Heart left ventricle (tissue), 16 donors: ENCODE measurements at regions of chr17 and their contacts with region 1.

Region 1: GRCh38 chr17:49843774-49844350 is 4.0 kb downstream of the TAC4 start:
- DNase-seq: peak in 1 of 5 donors; percentile 24
- ATAC-seq: no peak
- H3K4me3 ChIP-seq: no peak overlapping the region
- H3K27ac ChIP-seq: peak overlapping the region in 2 of 12 donors; percentile 15 to 91
- H3K4me1 ChIP-seq: peaks cover 0 to 46% (median 25%) of the 10 kb centered on the region in 12 donors
- H3K27me3 ChIP-seq: no peaks in the 10 kb centered on the region
- CTCF ChIP-seq: peak in 4 of 12 donors; percentile 22 to 34 (median 24)
- POLR2A ChIP-seq: no peak

Region 2: DNA sequence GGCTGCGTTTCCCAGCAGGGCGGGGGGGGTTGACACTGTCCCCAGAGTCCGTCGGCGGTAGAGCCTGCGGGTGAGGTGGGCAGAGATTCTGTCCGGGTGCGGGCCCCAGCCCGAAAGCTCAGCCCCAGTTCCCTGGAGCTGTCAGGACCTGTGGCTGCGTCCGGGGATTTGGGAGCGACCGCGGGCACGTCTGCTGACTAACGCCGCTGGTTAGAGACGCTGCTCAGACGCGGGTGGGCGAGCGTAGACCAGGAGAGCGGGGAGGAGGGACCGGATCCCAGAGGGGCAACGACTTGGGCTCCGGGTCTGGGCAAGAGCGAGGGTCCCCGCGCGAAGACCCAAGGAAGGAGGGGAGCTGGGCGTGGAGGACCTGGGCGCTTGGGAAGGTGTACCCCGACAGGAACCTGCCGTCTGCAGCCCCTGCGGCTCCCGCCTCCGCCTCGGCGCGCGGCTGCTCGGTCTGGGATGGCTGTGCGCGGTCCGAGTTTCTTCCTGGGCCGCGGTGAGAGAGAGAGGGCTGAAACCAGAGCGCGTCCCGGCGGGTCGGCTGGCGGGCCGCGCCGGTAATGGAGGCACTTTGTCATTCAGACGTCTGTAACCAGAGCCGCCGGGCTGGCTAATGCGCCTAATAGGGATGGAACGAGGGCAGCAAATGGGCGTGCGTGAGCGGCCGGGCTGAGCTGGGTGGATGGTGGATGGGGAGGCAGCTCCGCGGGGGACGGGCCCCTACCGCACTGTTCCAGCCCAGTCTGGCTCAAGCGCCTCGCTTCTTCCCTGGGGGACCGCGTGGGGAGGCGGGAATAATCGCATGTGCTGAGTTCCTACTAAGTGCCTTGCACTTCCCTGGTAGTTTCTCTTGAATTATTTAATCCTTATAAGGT is 346.5 kb before region 1 on chr17:
- intact Hi-C with region 1: no loop called
- DNase-seq: peak in 3 of 5 donors; percentile 68 to 83 (median 77)
- ATAC-seq: peak in 3 of 4 donors; percentile 59 to 76 (median 74)
- H3K4me3 ChIP-seq: peak overlapping the region; percentile 29 to 76 (median 56)
- H3K27ac ChIP-seq: peak overlapping the region in 5 of 12 donors; percentile 9 to 48 (median 32)
- H3K4me1 ChIP-seq: peaks cover 0 to 38% (median 25%) of the 10 kb centered on the region in 12 donors
- H3K27me3 ChIP-seq: peaks cover 17 to 77% (median 54%) of the 10 kb centered on the region in 9 donors
- CTCF ChIP-seq: no peak
- POLR2A ChIP-seq: no peak

Region 3: GRCh38 chr17:49588726-49589576 is 254.9 kb before region 1 on chr17:
- intact Hi-C with region 1: no loop called
- DNase-seq: no peak
- ATAC-seq: no peak
- H3K4me3 ChIP-seq: no peak overlapping the region
- H3K27ac ChIP-seq: peak overlapping the region in 1 of 12 donors; percentile 16
- H3K4me1 ChIP-seq: peaks cover 0 to 2% (median 0%) of the 10 kb centered on the region in 12 donors
- H3K27me3 ChIP-seq: no peaks in the 10 kb centered on the region
- CTCF ChIP-seq: no peak
- POLR2A ChIP-seq: no peak

Region 4: DNA sequence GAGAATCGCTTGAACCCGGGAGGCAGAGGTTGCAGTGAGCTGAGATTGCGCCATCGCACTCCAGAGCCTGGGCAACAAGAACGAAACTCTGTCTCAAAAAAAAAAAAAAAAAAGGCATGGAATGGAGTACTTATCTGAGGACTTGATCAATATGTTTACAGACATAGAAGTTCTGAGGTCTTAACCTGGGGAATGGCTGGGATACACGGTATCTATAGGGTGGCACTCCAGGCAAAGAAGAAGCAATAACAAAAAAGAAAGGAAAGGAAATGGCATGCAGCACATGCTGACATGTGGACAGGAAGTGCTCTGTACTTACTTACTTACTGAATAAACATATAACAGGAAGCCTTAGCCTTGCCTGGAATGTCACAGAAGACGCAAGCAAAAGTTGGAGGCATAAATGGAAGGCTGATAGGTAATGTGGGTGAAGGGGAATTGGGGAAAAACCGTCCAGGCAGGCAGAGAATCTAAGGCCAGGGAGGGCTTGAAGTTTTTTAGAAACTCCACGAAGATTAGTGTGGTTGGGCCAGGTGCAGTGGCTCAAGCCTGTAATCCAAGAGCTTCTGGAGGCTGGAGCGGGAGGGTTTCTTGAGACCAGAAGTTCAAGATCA is 155.9 kb before region 1 on chr17:
- intact Hi-C with region 1: no loop called
- DNase-seq: no peak
- ATAC-seq: peak; percentile 10 to 58 (median 28)
- H3K4me3 ChIP-seq: peak overlapping the region in 1 of 12 donors; percentile 43
- H3K27ac ChIP-seq: peak overlapping the region; percentile 1 to 93 (median 64)
- H3K4me1 ChIP-seq: peaks cover 0 to 52% (median 26%) of the 10 kb centered on the region in 12 donors
- H3K27me3 ChIP-seq: no peaks in the 10 kb centered on the region
- CTCF ChIP-seq: no peak
- POLR2A ChIP-seq: no peak

Region 5: GRCh38 chr17:49715717-49716279 is 128.1 kb before region 1 on chr17:
- intact Hi-C with region 1: loop called in 1 of 10 experiments (anchors 5 kb)
- DNase-seq: no peak
- ATAC-seq: peak in 1 of 4 donors; percentile 15
- H3K4me3 ChIP-seq: no peak overlapping the region
- H3K27ac ChIP-seq: peak overlapping the region in 5 of 12 donors; percentile 7 to 73 (median 10)
- H3K4me1 ChIP-seq: peaks cover 0 to 26% (median 0%) of the 10 kb centered on the region in 12 donors
- H3K27me3 ChIP-seq: no peaks in the 10 kb centered on the region
- CTCF ChIP-seq: no peak
- POLR2A ChIP-seq: no peak

Region 6: DNA sequence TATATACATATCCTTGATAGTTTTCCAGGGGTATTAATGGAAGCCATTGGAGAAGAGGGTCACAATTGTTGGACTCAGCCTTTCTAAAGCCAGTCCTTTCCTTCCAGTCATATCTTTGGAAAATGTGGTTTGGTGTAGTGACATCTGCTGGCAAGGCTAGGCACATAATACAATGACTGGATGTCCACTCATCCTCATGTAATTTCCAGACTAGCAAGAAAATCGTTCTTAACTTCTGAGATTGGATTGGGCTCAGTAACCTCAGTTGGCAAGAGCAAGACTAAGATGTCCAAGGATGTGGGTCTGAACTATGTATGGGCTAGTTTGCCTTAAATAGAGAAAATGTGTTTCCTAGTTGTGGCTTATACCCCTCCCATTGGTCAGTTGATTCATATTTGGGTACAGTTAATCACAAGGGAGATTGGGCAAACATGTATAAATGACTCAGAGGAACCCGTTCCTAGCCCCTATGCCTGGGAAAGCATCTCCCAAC is 64.1 kb before region 1 on chr17:
- intact Hi-C with region 1: loop called in 1 of 10 experiments (anchors 5 kb)
- DNase-seq: peak in 1 of 5 donors; percentile 36
- ATAC-seq: peak; percentile 28 to 67 (median 56)
- H3K4me3 ChIP-seq: no peak overlapping the region
- H3K27ac ChIP-seq: peak overlapping the region in 4 of 12 donors; percentile 8 to 38 (median 32)
- H3K4me1 ChIP-seq: peaks cover 0 to 58% (median 31%) of the 10 kb centered on the region in 12 donors
- H3K27me3 ChIP-seq: no peaks in the 10 kb centered on the region
- CTCF ChIP-seq: peak; percentile 31 to 74 (median 62)
- POLR2A ChIP-seq: no peak

Region 7: DNA sequence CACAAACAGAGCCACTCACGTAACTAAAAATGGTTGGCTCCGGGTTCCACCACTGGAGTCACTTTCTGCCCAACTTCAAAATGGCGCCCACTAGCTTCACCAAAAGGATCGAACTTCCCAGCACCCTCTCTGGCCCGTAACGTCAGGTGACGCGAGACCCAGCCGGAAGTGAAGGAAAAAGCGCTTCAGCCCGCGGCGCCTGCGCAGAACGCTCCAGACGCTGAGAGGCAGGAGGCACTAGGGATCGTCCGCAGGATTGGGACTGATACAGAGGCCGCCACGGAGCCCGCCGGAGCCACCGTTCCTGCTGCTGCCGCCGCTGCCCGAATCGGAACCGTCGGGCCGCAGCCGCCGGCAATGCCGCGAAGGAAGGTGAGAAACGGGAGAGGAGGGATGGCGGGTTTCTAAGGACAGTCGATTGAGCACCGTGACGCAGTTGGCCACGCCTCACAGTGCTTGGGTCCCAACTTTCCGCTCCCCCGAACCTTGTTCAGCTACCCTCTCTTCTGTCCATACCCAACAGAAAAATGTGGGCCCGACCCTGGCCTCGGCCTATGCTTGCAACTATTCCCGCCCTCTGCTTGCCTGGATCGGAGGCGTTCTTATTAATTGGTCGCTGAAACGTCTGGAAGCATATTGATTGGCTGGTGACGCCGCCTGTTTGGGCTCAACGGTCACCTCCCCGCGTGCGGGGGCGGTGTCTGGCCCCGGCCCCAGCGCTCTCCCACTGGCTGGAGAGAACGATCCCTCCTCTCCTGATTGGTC is 55.2 kb before region 1 on chr17 and contains the start of gene KAT7:
- intact Hi-C with region 1: loop called in 5 of 10 experiments (anchors 1 to 10 kb)
- DNase-seq: peak; percentile 99 to 100 (median 99)
- ATAC-seq: peak; percentile 95 to 97 (median 97)
- H3K4me3 ChIP-seq: peak within 1 kb of the TSS; percentile 77 to 100 (median 96)
- H3K27ac ChIP-seq: peak within 1 kb of the TSS; percentile 89 to 100 (median 99)
- H3K4me1 ChIP-seq: peaks cover 6 to 60% (median 42%) of the 10 kb centered on the region in 12 donors
- H3K27me3 ChIP-seq: no peaks in the 10 kb centered on the region
- CTCF ChIP-seq: peak in 7 of 12 donors; percentile 9 to 43 (median 25)
- POLR2A ChIP-seq: peak; percentile 38 to 87
- total RNA-seq, gene KAT7: 34.3 to 80.9 (median 56.0) TPM

Region 8: GRCh38 chr17:49798182-49798581 is 45.7 kb before region 1 on chr17:
- intact Hi-C with region 1: loop called in 2 of 10 experiments (anchors 10 kb)
- DNase-seq: no peak
- ATAC-seq: peak; percentile 32 to 60 (median 45)
- H3K4me3 ChIP-seq: no peak overlapping the region
- H3K27ac ChIP-seq: peak overlapping the region in 5 of 12 donors; percentile 2 to 46 (median 19)
- H3K4me1 ChIP-seq: peaks cover 0 to 39% (median 22%) of the 10 kb centered on the region in 12 donors
- H3K27me3 ChIP-seq: no peaks in the 10 kb centered on the region
- CTCF ChIP-seq: no peak
- POLR2A ChIP-seq: no peak